ENCODE measurements at regions of chr21 and their contacts with region 1.

Region 1: GRCh38 chr21:37009740-37010341 is 3.3 kb downstream of the RIPPLY3 start:
- DNase-seq: peak; percentile 52 to 82
- H3K4me3 ChIP-seq: peak overlapping the region in 2 of 3 donors; percentile 36 to 38
- H3K27ac ChIP-seq: no peak overlapping the region
- H3K4me1 ChIP-seq: peaks cover 0 to 4% of the 10 kb centered on the region in 2 donors
- H3K27me3 ChIP-seq: peaks cover 3 to 9% of the 10 kb centered on the region in 2 donors
- CTCF ChIP-seq: peak; percentile 67 to 77 (median 70)
- POLR2A ChIP-seq: no peak

Region 2: DNA sequence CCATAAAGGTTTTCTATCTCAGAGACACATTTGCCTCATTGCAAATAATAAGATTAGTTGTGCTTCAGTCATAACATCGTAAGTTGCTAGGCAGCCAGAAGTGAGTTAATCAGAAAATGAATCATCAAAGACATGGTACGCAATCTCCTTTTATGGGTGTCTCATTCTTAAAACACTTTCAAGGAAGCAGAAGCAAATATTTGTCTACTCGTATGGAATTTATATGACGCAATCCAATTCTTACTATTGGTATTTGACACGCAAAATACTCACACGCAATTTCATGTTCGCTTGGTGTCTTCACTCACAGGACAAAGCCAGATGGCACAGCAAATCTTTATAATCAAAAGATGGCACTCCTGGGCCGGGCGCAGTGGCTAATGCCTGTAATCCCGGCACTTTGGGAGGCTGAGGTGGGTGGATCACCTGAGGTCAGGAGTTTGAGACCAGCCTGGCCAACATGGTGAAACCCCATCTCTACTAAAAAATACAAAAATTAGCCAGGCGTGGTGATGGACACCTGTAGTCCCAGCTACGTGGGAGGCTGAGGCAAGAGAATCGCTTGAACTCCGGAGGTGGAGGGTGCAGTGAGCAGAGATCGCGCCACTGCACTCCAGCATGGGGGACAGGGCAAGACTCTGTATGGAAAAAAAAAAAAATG is 99.8 kb before region 1 on chr21:
- intact Hi-C with region 1: no loop called
- DNase-seq: no peak
- H3K4me3 ChIP-seq: no peak overlapping the region
- H3K27ac ChIP-seq: no peak overlapping the region
- H3K4me1 ChIP-seq: no peaks in the 10 kb centered on the region
- H3K27me3 ChIP-seq: no peaks in the 10 kb centered on the region
- CTCF ChIP-seq: no peak
- POLR2A ChIP-seq: no peak

Region 3: DNA sequence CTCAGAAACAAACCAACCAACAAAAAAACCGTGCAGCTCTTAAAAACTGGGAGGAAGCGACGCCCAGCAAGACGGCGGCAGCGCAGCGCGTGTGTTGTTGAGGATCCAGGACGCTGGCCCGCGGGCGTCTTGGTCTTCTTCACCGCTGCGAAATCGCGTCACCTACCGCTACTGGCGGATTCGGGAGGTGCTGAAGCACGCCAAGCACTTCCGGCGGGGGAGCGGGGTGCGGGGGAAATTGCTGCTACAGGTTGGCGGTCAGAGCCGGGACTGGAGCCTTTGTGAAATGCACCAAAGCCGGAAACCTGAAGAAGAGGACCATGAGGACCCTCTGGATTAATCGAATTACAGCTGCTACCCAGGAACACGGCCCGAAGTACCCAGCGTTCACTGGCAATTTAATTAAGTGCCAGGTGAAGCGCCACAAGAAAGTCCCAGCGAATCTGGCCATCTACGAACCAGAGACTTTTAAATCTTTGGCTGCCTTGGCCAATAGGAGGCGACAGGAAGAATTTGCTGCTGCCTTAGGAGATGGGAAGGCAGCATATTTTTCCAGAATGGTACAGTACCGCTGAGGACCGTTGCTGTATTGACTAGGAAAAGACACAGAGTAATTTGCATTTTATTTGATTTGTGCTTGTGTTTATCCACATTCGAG is 15.2 kb before region 1 on chr21:
- intact Hi-C with region 1: loop called (anchors 1 kb)
- DNase-seq: no peak
- H3K4me3 ChIP-seq: peak overlapping the region in 2 of 3 donors; percentile 1 to 38
- H3K27ac ChIP-seq: no peak overlapping the region
- H3K4me1 ChIP-seq: no peaks in the 10 kb centered on the region
- H3K27me3 ChIP-seq: no peaks in the 10 kb centered on the region
- CTCF ChIP-seq: no peak
- POLR2A ChIP-seq: no peak

Region 4: DNA sequence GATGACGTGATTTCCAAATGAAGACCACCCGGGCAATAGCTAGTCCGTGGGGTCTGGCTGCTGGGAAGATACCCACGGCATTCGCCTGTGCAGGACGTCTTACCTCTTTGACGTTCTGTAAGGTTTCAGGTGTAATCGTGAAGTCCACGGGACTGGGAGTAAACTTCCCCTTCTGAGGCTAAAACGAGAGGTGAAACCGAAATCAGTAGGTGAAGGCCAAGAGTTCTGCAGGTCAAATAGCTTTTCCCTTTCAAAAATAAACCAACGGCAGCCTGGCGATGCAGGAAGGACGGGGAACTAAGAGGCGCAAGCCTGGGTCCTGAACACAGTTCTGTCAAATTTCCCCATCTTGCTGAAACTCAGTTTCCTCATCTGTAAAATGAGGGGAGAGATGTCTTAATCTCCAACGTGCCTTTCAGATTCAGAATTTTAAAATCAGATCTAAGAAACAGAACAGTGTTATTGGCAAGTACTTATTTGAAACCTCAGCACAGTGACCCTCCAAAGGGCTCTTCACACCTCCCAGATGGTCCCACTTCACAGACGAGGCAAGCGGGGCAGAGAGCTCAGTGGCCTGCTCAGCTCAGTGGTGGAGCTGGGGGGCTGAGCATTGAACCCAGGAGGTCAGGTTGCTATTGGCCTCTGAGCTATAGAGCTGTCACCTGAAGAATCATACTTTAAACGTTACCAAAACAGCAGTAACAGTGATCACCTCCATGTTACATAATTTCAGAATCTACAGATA is 222.6 kb after region 1 on chr21:
- intact Hi-C with region 1: no loop called
- DNase-seq: no peak
- H3K4me3 ChIP-seq: no peak overlapping the region
- H3K27ac ChIP-seq: no peak overlapping the region
- H3K4me1 ChIP-seq: no peaks in the 10 kb centered on the region
- H3K27me3 ChIP-seq: no peaks in the 10 kb centered on the region
- CTCF ChIP-seq: no peak
- POLR2A ChIP-seq: no peak

Measured in breast epithelium (tissue), 4 donors.